Psoas muscle (tissue), 8 donors: ENCODE measurements at regions of chr20 and their contacts with region 1.

Region 1: GRCh38 chr20:3563548-3564177 is 92.8 kb downstream of the ATRN start:
- DNase-seq: no peak
- ATAC-seq: no peak
- H3K4me3 ChIP-seq: no peak overlapping the region
- H3K27ac ChIP-seq: no peak overlapping the region
- H3K4me1 ChIP-seq: no peaks in the 10 kb centered on the region
- H3K27me3 ChIP-seq: no peaks in the 10 kb centered on the region
- CTCF ChIP-seq: peak; percentile 62

Region 2: DNA sequence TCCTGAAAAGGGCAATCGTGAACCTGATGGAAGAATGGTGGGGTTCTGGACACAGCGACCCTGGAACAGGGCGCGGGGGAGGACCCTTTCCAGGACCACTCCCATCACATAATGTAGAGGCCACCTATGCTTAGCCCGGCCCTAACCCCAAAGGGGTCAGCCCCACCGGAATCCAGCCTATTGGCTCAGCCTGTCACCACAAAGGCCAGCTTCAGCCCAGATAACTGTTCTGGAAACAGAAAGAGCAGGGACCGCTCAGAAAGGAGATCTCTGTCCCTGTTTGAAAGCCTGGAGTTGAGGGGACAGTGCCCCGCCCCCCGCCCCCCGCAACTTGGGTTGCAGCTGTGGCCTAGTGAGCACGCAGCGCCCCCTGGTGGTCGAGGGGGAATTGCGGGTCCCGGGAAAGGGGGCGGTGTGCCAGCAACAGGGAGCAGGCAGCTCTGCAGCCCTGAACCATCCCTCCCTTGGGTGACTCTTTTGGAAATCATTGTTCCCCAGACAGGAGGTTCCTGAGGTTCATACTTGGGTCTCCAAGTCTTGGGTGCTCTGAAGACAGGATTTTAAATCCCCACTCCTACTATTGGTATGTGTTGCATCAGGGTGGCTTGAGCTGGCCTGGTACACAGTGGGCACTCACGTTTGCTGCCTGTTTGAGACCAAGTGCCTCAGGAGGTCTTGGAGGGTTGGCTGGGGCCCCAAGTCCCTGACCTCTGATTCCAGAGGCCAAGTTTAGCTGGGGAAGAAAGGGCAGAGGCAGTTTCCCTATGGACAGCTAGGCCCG is 147.2 kb after region 1 on chr20:
- intact Hi-C with region 1: loop called in 1 of 2 experiments (anchors 10 kb)
- DNase-seq: peak; percentile 79 to 86
- ATAC-seq: peak in 1 of 4 donors; percentile 59
- H3K4me3 ChIP-seq: peak overlapping the region; percentile 19
- H3K27ac ChIP-seq: no peak overlapping the region
- H3K4me1 ChIP-seq: peaks cover 7% of the 10 kb centered on the region
- H3K27me3 ChIP-seq: no peaks in the 10 kb centered on the region
- CTCF ChIP-seq: peak; percentile 94